ENCODE measurements at regions of chr7 and their contacts with region 1.

Region 1: DNA sequence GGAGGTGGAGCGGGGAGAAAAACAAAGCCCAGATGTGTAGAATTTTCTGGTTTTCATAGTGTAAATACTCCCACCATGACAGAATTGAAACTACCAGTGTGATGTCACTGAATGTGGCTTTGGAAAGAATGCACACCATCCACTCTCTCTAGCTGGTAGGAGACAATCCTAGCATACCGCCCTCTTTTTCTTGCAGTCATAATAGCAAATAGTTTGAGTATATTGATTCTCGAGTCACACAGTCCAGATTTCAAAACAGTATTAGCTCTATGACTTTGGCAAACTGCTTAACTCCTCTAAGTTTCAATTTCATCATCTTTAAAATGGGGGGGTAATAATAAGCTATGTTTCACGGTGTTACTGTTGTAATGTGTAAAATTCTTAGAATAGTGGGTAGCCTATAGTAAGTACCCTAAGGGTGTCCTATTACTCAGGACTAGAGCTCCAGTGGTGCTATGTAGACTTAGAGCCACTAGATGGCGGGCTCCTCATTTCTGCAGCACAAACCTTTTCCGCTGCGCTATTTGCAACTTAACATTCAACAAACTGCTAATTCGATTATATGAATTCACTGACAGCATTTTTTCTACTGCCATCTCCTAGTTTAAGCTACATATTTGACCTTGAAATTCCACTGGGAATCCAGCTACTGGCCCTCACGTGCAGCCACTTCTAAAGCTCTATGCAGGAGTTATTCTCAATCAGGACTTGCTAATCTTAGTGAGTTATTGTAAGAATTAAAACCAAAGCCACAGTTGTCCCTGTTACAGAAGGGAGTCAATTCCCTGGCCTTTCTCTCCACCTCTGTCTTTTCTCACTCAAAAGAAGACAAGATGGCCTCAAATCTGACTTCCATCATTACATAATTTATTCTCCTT is 18.7 kb downstream of the TAS2R40 start:
- DNase-seq: peak; percentile 74 to 77
- H3K4me3 ChIP-seq: no peak overlapping the region
- H3K4me3 Mint-ChIP-seq: no peak overlapping the region
- H3K27ac Mint-ChIP-seq: no peak overlapping the region
- H3K4me1 ChIP-seq: peaks cover 22% of the 10 kb centered on the region
- H3K4me1 Mint-ChIP-seq: peaks cover 13% of the 10 kb centered on the region
- H3K27me3 ChIP-seq: no peaks in the 10 kb centered on the region
- H3K27me3 Mint-ChIP-seq: peaks cover 9% of the 10 kb centered on the region
- CTCF ChIP-seq: peak; percentile 86 to 91

Region 2: GRCh38 chr7:143214789-143215679 is 25.5 kb before region 1 on chr7:
- CTCF ChIA-PET with region 1: interaction called, 18 read pairs
- POLR2A ChIA-PET with region 1: no interaction called
- intact Hi-C with region 1: no loop called
- DNase-seq: peak; percentile 58 to 79
- H3K4me3 ChIP-seq: no peak overlapping the region
- H3K4me3 Mint-ChIP-seq: no peak overlapping the region
- H3K27ac Mint-ChIP-seq: no peak overlapping the region
- H3K4me1 ChIP-seq: no peaks in the 10 kb centered on the region
- H3K4me1 Mint-ChIP-seq: no peaks in the 10 kb centered on the region
- H3K27me3 ChIP-seq: no peaks in the 10 kb centered on the region
- H3K27me3 Mint-ChIP-seq: peaks cover 7% of the 10 kb centered on the region
- CTCF ChIP-seq: peak; percentile 98 to 100

Region 3: DNA sequence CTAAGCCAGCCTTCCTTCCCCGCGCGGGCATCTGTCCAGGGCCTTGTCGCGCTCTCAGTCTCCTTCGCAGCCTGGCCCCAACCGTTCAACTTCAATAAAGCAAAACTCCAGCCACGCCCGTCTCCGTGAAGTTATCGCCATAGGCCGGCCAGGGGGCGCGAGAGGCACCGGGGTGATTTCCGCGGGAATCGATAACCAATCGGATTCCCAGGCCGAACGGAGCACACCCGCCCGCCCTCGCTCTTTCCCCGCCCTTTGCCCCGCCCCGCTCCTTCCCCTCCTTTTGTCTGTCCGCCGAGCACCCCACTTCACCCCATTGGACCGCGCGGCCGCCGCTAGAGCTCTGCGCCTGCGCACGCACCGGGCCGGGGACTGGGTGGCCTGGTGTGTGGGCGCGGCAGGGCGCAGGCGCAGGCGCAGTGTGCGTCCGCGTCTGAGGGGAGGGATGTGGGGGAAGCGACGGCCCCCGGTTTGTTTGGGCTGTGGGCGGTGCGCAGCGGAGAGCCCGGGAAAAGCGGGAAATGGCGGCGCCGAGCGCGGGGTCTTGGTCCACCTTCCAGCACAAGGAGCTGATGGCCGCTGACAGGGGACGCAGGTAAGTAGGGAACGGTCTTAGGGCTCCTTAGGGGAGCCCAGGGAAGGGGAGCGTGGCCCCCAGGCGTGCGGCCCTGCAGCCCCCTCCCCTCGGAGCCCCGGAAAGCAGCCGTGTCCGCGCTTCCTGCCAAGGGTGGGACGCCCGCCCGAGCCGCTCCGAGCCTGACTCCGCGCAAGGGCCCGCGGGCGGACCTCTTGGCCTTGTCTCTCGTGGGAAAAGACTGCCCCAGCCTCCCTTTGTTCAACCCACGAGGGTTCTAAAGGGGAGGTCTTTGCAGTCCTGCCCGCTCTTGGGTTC is 47.7 kb after region 1 on chr7 and contains the start of gene CASP2:
- CTCF ChIA-PET with region 1: interaction called, 20 read pairs
- POLR2A ChIA-PET with region 1: interaction called, 3 read pairs
- intact Hi-C with region 1: loop called (anchors 1 kb)
- DNase-seq: peak; percentile 99
- H3K4me3 ChIP-seq: peak within 1 kb of the TSS; percentile 73
- H3K4me3 Mint-ChIP-seq: peak within 1 kb of the TSS; percentile 81
- H3K27ac Mint-ChIP-seq: peak within 1 kb of the TSS; percentile 89
- H3K4me1 ChIP-seq: peaks cover 37% of the 10 kb centered on the region
- H3K4me1 Mint-ChIP-seq: peaks cover 47% of the 10 kb centered on the region
- H3K27me3 ChIP-seq: no peaks in the 10 kb centered on the region
- H3K27me3 Mint-ChIP-seq: no peaks in the 10 kb centered on the region
- CTCF ChIP-seq: peak; percentile 53 to 55
- total RNA-seq, gene CASP2: 51.7 and 62.0 TPM in 2 replicates

Region 4: GRCh38 chr7:143305423-143306070 is 65.0 kb after region 1 on chr7:
- CTCF ChIA-PET with region 1: interaction called, 5 read pairs
- POLR2A ChIA-PET with region 1: no interaction called
- intact Hi-C with region 1: loop called (anchors 1 kb)
- DNase-seq: peak; percentile 71 to 83
- H3K4me3 ChIP-seq: no peak overlapping the region
- H3K4me3 Mint-ChIP-seq: no peak overlapping the region
- H3K27ac Mint-ChIP-seq: no peak overlapping the region
- H3K4me1 ChIP-seq: 0 out of 2 replicates have a peak, but pooled peaks cover 6% of the 10 kb centered on the region
- H3K4me1 Mint-ChIP-seq: peaks cover 3% of the 10 kb centered on the region
- H3K27me3 ChIP-seq: no peaks in the 10 kb centered on the region
- H3K27me3 Mint-ChIP-seq: no peaks in the 10 kb centered on the region
- CTCF ChIP-seq: peak; percentile 74 to 81

Region 5: DNA sequence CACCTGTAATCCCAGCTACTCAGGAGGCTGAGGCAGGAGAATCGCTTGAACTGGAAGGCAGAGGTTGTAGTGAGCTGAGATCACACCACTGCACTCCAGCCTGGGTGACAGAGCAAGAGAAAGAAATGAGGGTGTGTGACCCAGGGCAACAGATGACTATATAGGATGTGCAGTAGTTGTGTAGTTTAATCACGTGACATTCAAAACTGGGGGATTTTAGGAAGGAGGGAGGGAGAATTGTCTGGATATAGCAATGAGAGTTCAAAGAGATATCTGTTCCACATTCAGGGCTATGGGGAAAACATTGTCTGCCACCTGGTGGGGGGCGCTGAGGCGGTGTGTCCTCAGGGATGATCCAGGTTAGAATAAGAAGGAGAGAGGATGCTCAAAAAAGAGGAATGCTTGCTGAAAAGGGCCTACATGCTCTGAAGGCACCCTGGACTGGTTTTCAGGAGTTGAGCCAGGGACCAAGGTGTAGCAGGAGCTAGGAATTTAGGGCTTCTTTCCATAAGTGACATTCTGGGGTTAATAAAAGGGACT is 132.8 kb after region 1 on chr7:
- CTCF ChIA-PET with region 1: interaction called, 10 read pairs
- POLR2A ChIA-PET with region 1: no interaction called
- intact Hi-C with region 1: loop called (anchors 1 kb)
- DNase-seq: peak in 1 of 2 experiments; percentile 70
- H3K4me3 ChIP-seq: no peak overlapping the region
- H3K4me3 Mint-ChIP-seq: no peak overlapping the region
- H3K27ac Mint-ChIP-seq: no peak overlapping the region
- H3K4me1 ChIP-seq: peaks cover 39% of the 10 kb centered on the region
- H3K4me1 Mint-ChIP-seq: peaks cover 40% of the 10 kb centered on the region
- H3K27me3 ChIP-seq: no peaks in the 10 kb centered on the region
- H3K27me3 Mint-ChIP-seq: no peaks in the 10 kb centered on the region
- CTCF ChIP-seq: peak; percentile 34 to 75

Region 6: DNA sequence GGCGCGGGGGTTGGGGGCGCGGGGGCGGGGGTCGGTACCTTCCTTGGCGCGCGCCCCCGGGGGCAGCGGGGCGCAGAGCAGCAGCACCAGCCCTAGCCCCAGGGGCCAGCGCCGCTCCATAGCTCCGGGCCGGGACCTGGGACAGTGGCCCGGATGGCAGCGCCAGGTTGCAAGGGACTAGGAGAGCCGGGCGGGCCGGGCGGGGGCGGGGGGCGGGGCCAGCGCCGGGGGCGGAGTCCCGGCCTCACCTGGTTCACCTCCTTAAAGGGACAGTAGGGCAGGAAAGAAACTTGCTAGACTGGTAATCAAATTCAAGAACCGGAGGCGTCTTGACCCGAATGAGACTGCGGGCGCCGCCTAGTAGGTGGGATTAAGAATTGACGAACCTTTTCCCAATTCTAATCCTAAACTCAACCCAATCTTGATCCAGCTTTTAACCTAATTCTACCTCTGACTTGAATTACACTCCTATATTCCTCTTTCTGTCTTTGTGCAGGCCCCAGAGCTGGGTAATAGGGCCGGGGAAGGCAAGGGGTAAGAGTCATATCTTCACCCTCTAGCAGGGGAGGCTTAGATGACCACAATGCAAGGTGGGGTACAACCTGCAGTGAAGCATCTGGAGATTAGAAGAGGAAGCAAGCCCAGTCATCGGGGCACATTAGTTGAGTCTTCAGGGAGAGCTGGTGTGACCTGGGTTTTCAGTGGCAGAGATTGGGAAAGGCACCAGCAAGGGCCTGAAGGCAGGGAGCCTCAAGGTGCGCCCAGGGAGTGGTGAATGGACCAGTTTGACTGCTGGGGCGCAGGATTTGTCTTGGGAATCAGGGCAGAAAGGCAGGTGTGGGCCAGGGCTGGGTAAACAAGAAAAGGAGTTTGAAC is 168.4 kb after region 1 on chr7 and contains the start of gene EPHA1:
- CTCF ChIA-PET with region 1: interaction called, 4 read pairs
- POLR2A ChIA-PET with region 1: no interaction called
- intact Hi-C with region 1: loop called (anchors 2 kb)
- DNase-seq: peak; percentile 86 to 88
- H3K4me3 ChIP-seq: peak within 1 kb of the TSS; percentile 59
- H3K4me3 Mint-ChIP-seq: peak within 1 kb of the TSS; percentile 86
- H3K27ac Mint-ChIP-seq: peak within 1 kb of the TSS; percentile 86
- H3K4me1 ChIP-seq: peaks cover 49% of the 10 kb centered on the region
- H3K4me1 Mint-ChIP-seq: peaks cover 68% of the 10 kb centered on the region
- H3K27me3 ChIP-seq: no peaks in the 10 kb centered on the region
- H3K27me3 Mint-ChIP-seq: no peaks in the 10 kb centered on the region
- CTCF ChIP-seq: peak; percentile 68 to 87
- total RNA-seq, gene EPHA1: 66.6 and 69.2 TPM in 2 replicates

Measured in Caco-2 (cell line).